AG04450 (cell line): ENCODE measurements at regions of chr5 and their contacts with region 1.

Region 1: DNA sequence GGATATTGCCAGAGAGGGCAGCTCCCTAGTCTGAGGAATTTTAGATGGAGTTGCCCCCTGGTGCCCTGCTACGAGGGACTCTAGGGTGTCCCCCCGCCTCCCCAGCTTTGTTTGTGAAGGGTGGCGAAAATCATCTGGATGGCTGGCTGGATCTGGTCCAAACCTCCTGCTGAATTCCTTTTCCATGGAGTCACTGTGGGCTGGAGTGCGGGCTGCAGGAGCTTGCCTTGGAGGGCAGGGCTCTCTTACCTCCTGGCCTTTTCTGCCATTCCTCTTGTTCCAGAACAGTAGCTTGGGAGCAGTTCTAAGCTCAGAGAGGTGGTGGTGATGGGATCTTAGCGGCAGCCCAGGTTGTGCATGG is 2.1 kb downstream of the SYNPO start:
- DNase-seq: peak; percentile 64
- H3K4me3 ChIP-seq: peak overlapping the region; percentile 74
- H3K27ac ChIP-seq: peak overlapping the region; percentile 95
- H3K27me3 ChIP-seq: no peaks in the 10 kb centered on the region
- CTCF ChIP-seq: no peak

Region 2: DNA sequence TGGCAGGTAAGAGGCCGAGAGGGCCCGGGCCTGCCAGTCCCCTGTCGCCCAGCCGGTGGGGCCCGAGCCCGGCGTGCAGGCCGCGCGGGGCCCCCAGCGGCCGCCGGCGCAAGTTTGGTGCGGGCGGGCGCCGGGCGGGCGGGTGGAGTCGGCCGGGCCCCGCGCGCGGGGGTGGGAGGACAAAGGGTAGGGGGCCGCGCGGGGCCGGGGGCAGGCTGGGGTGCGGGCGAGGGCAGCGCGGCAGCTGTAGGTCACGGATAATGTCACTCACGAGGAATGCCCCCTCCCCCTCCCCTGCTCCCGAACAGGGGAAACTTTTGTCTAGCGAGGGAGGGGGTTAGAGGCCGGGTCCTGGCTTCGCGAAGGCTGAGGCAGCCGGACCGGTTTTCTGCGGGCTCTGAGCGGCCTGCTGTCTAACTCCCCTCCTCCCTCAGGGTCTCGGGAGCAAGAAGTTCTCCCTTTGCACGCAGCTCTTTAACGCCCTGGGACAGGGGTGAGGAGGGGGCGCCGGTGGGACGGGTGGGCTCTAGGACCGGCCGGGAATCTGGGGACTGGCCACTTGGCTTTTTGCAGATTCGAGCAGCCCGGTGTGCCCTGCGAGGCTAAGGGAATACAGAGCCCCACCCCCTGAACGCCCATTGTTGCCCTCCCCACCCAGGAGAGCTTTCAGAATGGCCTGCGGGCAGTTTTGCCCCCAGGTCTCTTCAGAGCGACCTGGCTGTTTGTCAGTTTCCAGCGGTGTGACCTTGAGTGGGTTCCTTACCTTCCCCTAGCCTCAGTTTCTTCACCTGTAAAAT is 155.9 kb before region 1 on chr5:
- CTCF ChIA-PET with region 1: no interaction called
- POLR2A ChIA-PET with region 1: interaction called, 10 read pairs
- DNase-seq: no peak
- H3K4me3 ChIP-seq: peak overlapping the region; percentile 87
- H3K27ac ChIP-seq: peak overlapping the region; percentile 77
- H3K27me3 ChIP-seq: no peaks in the 10 kb centered on the region
- CTCF ChIP-seq: no peak

Region 3: GRCh38 chr5:150656191-150657132 is 13.9 kb after region 1 on chr5:
- CTCF ChIA-PET with region 1: interaction called, 17 read pairs
- POLR2A ChIA-PET with region 1: interaction called, 17 read pairs
- DNase-seq: no peak
- H3K4me3 ChIP-seq: peak overlapping the region; percentile 59
- H3K27ac ChIP-seq: no peak overlapping the region
- H3K27me3 ChIP-seq: peaks cover 4% of the 10 kb centered on the region
- CTCF ChIP-seq: peak; percentile 45